ENCODE measurements at regions of chr11 and their contacts with region 1.

Region 1: DNA sequence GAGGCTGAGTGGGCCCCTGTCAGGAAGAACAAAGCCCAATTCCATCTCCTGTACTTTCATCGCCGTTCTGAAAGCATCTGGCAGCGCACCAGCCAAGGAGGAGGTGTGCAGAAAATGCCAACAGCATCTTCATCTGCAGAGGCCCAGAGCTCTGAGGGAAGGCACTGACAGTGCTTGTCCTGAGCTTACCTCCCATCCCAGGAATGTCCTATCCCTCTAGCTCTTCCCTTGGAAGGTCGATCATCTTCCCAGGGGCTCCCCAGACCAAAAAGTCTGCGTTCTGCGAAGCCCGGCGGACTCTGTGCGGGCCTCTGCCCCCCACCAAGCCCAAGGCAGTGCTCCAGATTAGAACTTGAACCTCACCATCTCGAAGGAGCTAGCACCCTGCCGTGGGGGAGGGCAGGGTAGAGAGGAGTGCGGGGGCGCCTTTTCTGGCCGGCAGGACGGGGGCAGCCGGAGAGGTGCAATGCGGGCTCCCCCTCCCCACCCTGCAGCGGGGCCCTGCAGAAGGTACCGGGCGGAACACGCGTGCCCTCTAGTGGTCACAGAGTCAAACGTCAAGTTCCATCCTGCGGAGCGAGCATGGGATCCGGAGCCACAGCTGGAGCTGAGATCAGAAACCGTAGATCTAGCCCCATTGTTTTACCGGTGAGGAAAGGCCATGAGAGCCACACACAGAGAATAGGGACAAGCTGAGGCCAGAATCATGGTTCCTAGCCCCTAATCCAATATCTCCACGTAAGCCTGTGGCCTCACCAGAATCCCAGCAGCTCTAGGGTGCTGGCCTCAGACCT is 5.0 kb downstream of the SCN2B start:
- DNase-seq: peak; percentile 81
- H3K4me3 Mint-ChIP-seq: no peak overlapping the region
- H3K27ac Mint-ChIP-seq: no peak overlapping the region
- H3K4me1 Mint-ChIP-seq: no peaks in the 10 kb centered on the region
- H3K27me3 Mint-ChIP-seq: peaks cover 9% of the 10 kb centered on the region

Region 2: GRCh38 chr11:118156531-118157185 is 14.8 kb before region 1 on chr11:
- CTCF ChIA-PET with region 1: interaction called, 70 read pairs
- POLR2A ChIA-PET with region 1: no interaction called
- intact Hi-C with region 1: no loop called
- DNase-seq: peak; percentile 34
- H3K4me3 Mint-ChIP-seq: no peak overlapping the region
- H3K27ac Mint-ChIP-seq: no peak overlapping the region
- H3K4me1 Mint-ChIP-seq: peaks cover 13% of the 10 kb centered on the region
- H3K27me3 Mint-ChIP-seq: peaks cover 60% of the 10 kb centered on the region

Region 3: DNA sequence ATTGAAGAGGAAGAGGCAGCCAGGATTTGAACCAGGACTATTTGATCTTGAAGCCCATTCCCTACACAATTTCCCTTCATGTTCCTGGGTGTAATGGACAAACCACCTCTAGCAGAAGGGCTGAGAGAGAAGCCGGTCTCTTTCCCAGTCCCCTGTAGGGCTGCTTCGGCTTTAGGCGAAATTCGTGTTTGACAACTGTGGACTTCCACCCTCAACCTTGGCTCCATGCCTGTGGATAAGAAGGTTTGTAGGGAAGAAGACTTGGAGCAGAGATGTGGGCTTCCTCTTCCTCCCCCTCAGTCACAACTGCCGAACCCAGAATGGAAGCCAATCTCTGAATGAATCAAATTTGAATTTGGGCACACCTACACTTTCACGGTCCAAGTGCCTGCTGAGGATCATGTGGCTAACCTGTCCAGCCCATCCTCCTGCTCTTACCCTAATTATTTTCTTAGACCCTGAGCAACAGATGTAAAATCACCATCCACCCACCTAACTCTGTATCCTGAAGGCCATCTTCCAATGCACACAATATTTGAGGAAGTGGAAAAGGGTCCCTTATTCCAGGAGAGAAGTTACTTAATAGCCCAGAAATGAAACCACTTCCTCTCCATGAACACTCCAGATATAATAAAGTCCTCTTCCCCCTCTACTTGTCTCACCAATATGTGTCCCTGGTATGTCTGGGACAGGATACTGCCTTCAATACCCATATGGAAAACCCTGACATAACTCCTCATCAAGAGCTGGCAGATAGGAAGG is 15.1 kb after region 1 on chr11:
- CTCF ChIA-PET with region 1: interaction called, 38 read pairs
- POLR2A ChIA-PET with region 1: no interaction called
- intact Hi-C with region 1: no loop called
- DNase-seq: no peak
- H3K4me3 Mint-ChIP-seq: no peak overlapping the region
- H3K27ac Mint-ChIP-seq: no peak overlapping the region
- H3K4me1 Mint-ChIP-seq: no peaks in the 10 kb centered on the region
- H3K27me3 Mint-ChIP-seq: peaks cover 10% of the 10 kb centered on the region

Region 4: GRCh38 chr11:118290923-118291322 is 119.5 kb after region 1 on chr11:
- CTCF ChIA-PET with region 1: interaction called, 10 read pairs
- POLR2A ChIA-PET with region 1: interaction called, 3 read pairs
- intact Hi-C with region 1: no loop called
- DNase-seq: peak; percentile 61
- H3K4me3 Mint-ChIP-seq: no peak overlapping the region
- H3K27ac Mint-ChIP-seq: peak overlapping the region; percentile 23
- H3K4me1 Mint-ChIP-seq: peaks cover 14% of the 10 kb centered on the region
- H3K27me3 Mint-ChIP-seq: no peaks in the 10 kb centered on the region